Right cardiac atrium (tissue), 5 donors: ENCODE measurements at regions of chr7 and their contacts with region 1.

Region 1: DNA sequence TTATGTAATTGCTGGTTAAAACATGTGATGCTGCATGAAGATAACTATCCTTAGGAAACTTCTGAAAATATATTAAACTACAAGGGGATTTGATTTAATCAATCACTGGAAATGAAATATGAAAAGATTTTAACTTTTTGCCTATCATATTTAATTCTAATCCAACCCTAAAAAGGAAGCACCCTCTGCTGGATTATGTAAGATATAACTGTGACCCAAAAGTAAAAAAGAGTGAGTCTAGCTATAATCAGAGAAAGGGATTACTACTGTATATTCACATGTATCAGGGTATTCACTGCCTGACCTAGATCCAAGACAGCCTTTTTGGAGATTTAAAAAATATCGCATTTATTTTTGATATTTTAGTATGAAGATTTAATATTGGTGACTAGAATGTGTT is 295.5 kb downstream of the MDFIC start:
- DNase-seq: no peak
- ATAC-seq: no peak
- H3K4me3 ChIP-seq: no peak overlapping the region
- H3K27ac ChIP-seq: no peak overlapping the region
- H3K4me1 ChIP-seq: no peaks in the 10 kb centered on the region
- H3K27me3 ChIP-seq: no peaks in the 10 kb centered on the region

Region 2: DNA sequence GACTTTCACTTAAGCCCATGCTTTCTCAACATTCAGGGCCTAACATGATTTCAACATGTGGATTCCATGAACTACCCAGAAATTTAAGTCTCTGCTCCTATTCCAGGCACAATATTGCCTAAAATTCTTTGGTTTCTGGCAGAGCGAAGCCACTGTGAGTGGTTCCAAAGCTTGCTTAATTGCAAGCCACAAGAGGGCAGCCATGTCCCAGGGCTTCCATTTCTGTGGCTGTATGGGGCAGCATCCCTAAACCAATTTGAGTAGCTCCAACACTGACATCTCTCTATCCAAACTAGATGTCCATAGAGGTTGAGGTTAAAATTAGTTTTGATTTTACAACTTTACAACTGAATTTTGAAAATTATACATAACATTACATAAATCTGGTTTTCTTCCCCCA is 351.8 kb before region 1 on chr7:
- intact Hi-C with region 1: loop called in 3 of 4 experiments (anchors 5 to 10 kb)
- DNase-seq: peak; percentile 58 to 81 (median 62)
- ATAC-seq: peak; percentile 89 to 90
- H3K4me3 ChIP-seq: no peak overlapping the region
- H3K27ac ChIP-seq: no peak overlapping the region
- H3K4me1 ChIP-seq: no peaks in the 10 kb centered on the region
- H3K27me3 ChIP-seq: no peaks in the 10 kb centered on the region

Region 3: GRCh38 chr7:114874170-114874569 is 343.2 kb before region 1 on chr7:
- intact Hi-C with region 1: loop called in 3 of 4 experiments (anchors 5 to 10 kb)
- DNase-seq: no peak
- ATAC-seq: peak in 1 of 2 donors; percentile 49
- H3K4me3 ChIP-seq: no peak overlapping the region
- H3K27ac ChIP-seq: no peak overlapping the region
- H3K4me1 ChIP-seq: no peaks in the 10 kb centered on the region
- H3K27me3 ChIP-seq: no peaks in the 10 kb centered on the region

Region 4: DNA sequence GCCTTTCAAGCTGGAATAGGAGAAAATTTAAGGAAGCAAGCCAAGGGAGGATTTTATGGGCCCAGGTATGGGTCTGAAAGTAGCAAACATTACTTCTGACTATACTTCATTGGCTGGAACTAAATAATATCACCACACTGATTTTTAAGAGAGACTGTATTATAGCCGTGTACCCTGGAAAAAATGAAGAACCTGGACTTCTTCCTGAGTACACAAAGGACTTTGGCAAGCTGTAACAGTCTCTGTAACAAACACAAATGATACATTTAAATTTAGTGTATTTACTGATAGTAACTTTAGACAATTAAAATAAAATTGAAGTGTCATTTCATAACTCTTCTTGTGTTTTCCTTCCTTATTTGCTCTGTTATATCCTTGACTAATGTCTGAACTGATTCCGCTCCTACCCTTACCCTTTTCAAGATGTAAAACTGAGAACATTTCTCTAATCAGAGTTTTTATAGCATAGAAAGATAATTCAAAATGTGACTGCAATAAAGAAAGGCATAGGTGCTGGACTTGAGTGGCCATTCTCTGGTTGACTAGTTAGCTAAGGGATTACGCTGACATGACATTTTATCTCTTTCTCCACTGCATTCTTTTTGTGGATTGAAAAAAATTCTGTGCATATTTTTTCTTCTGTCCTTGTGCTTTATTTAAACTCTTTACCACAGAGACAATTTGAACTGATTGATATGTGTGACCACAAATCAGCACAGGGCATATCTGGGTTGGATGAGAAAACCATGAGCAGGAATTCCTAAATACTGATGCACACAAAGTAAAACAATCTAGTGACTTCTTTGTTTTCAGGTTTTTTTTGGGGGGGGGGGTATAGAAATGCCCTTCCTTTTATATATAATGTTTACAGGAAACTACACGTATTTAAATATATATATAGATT is 54.2 kb after region 1 on chr7:
- intact Hi-C with region 1: no loop called
- DNase-seq: no peak
- ATAC-seq: no peak
- H3K4me3 ChIP-seq: no peak overlapping the region
- H3K27ac ChIP-seq: no peak overlapping the region
- H3K4me1 ChIP-seq: no peaks in the 10 kb centered on the region
- H3K27me3 ChIP-seq: no peaks in the 10 kb centered on the region